ENCODE measurements at regions of chr5 and their contacts with region 1.

Region 1: GRCh38 chr5:17216176-17216973 is 1.1 kb upstream of the BASP1 start:
- DNase-seq: peak; percentile 83
- H3K4me3 ChIP-seq: peak overlapping the region; percentile 63 to 93
- H3K27ac ChIP-seq: peak overlapping the region; percentile 46 to 89
- H3K4me1 ChIP-seq: no peaks in the 10 kb centered on the region
- H3K27me3 ChIP-seq: no peaks in the 10 kb centered on the region
- CTCF ChIP-seq: peak; percentile 42 to 92 (median 84)
- POLR2A ChIP-seq: no peak

Region 2: GRCh38 chr5:17267106-17267505 is 50.7 kb after region 1 on chr5:
- intact Hi-C with region 1: no loop called
- DNase-seq: no peak
- H3K4me3 ChIP-seq: no peak overlapping the region
- H3K27ac ChIP-seq: no peak overlapping the region
- H3K4me1 ChIP-seq: no peaks in the 10 kb centered on the region
- H3K27me3 ChIP-seq: no peaks in the 10 kb centered on the region
- CTCF ChIP-seq: no peak
- POLR2A ChIP-seq: no peak

Region 3: DNA sequence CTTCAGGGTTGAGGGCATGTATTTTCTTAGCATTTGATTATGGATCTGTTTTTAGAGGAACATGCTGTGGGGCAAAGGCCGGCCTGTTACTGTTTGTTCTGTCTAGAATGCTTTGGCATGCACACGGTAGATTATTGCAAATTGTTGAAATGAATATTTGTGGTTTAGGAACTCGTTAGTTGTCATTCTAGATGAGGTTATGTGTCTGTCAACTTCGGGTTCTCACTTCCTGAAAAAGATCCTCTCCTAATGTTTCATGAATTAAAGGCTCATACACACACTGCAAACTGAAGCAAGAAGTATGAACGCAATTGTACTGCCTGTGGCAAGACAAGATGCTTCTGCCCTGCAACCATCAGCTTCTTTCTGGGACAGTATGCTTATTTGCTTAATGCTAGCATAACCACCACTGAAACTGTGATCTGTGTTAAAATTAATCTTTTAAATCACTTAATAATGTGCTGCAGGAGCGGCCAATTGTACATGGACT is 100.6 kb after region 1 on chr5:
- intact Hi-C with region 1: no loop called
- DNase-seq: no peak
- H3K4me3 ChIP-seq: no peak overlapping the region
- H3K27ac ChIP-seq: no peak overlapping the region
- H3K4me1 ChIP-seq: peaks cover 9% of the 10 kb centered on the region
- H3K27me3 ChIP-seq: no peaks in the 10 kb centered on the region
- CTCF ChIP-seq: no peak
- POLR2A ChIP-seq: no peak

Region 4: GRCh38 chr5:18305297-18305924 is 1089.0 kb after region 1 on chr5:
- intact Hi-C with region 1: loop called (anchors 2 kb)
- DNase-seq: no peak
- H3K4me3 ChIP-seq: no peak overlapping the region
- H3K27ac ChIP-seq: no peak overlapping the region
- H3K4me1 ChIP-seq: no peaks in the 10 kb centered on the region
- H3K27me3 ChIP-seq: no peaks in the 10 kb centered on the region
- CTCF ChIP-seq: peak in 3 of 4 experiments; percentile 32 to 70 (median 60)
- POLR2A ChIP-seq: no peak

Region 5: GRCh38 chr5:18314192-18314778 is 1097.9 kb after region 1 on chr5:
- intact Hi-C with region 1: loop called (anchors 2 kb)
- DNase-seq: no peak
- H3K4me3 ChIP-seq: no peak overlapping the region
- H3K27ac ChIP-seq: no peak overlapping the region
- H3K4me1 ChIP-seq: no peaks in the 10 kb centered on the region
- H3K27me3 ChIP-seq: no peaks in the 10 kb centered on the region
- CTCF ChIP-seq: peak; percentile 31 to 63 (median 41)
- POLR2A ChIP-seq: no peak